ENCODE measurements at regions of chr9 and their contacts with region 1.

Region 1: GRCh38 chr9:4137234-4137633 is 162.6 kb downstream of the GLIS3 start:
- DNase-seq: no peak
- H3K4me3 ChIP-seq: no peak overlapping the region
- H3K27ac ChIP-seq: no peak overlapping the region
- H3K4me1 ChIP-seq: peaks cover 3 to 6% of the 10 kb centered on the region in 2 donors
- H3K27me3 ChIP-seq: no peaks in the 10 kb centered on the region
- CTCF ChIP-seq: no peak

Region 2: GRCh38 chr9:4092793-4093709 is 44.2 kb before region 1 on chr9:
- intact Hi-C with region 1: loop called (anchors 5 kb)
- DNase-seq: peak in 1 of 2 donors; percentile 70
- H3K4me3 ChIP-seq: no peak overlapping the region
- H3K27ac ChIP-seq: peak overlapping the region; percentile 65 to 75
- H3K4me1 ChIP-seq: peaks cover 11 to 30% of the 10 kb centered on the region in 2 donors
- H3K27me3 ChIP-seq: no peaks in the 10 kb centered on the region
- CTCF ChIP-seq: peak in 1 of 3 experiments; percentile 15

Region 3: GRCh38 chr9:4180907-4181605 is 43.8 kb after region 1 on chr9:
- intact Hi-C with region 1: no loop called
- DNase-seq: no peak
- H3K4me3 ChIP-seq: no peak overlapping the region
- H3K27ac ChIP-seq: no peak overlapping the region
- H3K4me1 ChIP-seq: no peaks in the 10 kb centered on the region
- H3K27me3 ChIP-seq: no peaks in the 10 kb centered on the region
- CTCF ChIP-seq: no peak